MCF 10A (cell line): ENCODE measurements at regions of chr11 and their contacts with region 1.

Region 1: DNA sequence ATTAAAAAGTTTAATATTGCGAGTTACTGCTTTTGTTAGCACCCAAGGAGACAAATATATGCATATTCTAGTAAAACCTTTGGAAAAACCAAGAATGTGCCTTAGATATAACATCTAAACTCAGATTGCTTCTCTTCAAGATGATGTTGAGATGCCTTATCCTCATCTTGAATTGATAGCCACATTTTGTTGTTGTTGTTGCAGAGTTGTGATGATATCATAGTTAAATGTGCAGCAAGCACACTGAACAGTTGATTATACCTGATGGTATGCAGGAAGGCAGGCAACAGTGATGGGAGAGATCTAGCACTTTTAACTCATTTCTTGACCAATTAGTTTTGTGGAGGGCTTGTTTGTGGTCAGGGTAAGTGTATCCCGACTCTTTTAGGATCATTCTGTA is 48.0 kb downstream of the KDM2A start:
- DNase-seq: no peak
- H3K4me3 Mint-ChIP-seq: no peak overlapping the region
- H3K27ac Mint-ChIP-seq: no peak overlapping the region
- H3K4me1 Mint-ChIP-seq: peaks cover 28% of the 10 kb centered on the region
- H3K27me3 Mint-ChIP-seq: no peaks in the 10 kb centered on the region
- CTCF ChIP-seq: no peak

Region 2: DNA sequence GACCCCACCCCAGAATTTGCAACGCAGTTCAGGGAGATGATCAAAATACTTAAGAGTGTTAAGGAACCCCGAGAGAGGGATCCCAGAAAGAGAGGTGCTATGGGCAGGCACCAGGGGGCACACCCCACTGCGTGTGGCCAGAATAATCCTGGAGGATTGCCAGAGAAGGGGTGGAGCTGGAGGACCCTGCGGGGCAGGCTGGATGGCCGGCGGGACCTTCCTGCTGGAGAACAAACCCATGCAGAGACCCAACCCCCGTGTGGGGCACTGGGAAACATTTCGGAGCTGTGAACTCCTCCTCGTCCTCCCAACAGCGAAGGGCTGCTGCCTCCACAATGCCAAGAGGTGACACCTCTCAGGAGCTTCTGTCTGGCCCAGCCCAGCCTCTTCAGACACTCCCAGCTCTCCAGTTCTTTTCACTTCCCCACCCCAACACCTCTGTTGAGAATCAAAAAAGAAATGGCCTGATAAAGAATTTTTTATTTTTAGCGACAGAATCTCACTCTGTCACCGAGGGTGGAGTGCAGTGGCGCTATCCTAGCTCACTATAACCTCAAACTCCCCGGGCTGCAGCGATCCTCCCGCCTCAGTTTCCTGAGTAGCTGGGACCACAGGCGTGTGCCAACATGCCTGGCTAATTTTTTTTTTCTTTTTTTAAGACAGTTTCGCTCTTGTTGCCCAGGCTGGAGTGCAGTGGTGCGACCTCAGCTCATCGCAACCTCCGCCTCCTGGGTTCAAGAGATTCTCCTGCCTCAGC is 84.9 kb before region 1 on chr11:
- CTCF ChIA-PET with region 1: interaction called, 11 read pairs
- POLR2A ChIA-PET with region 1: interaction called, 6 read pairs
- intact Hi-C with region 1: loop called (anchors 1 kb)
- DNase-seq: no peak
- H3K4me3 Mint-ChIP-seq: no peak overlapping the region
- H3K27ac Mint-ChIP-seq: peak overlapping the region; percentile 35
- H3K4me1 Mint-ChIP-seq: peaks cover 39% of the 10 kb centered on the region
- H3K27me3 Mint-ChIP-seq: no peaks in the 10 kb centered on the region
- CTCF ChIP-seq: no peak

Region 3: GRCh38 chr11:67118801-67119584 is 48.1 kb before region 1 on chr11 and contains the start of gene KDM2A:
- CTCF ChIA-PET with region 1: interaction called, 6 read pairs
- POLR2A ChIA-PET with region 1: interaction called, 6 read pairs
- intact Hi-C with region 1: loop called (anchors 2 kb)
- DNase-seq: peak; percentile 97
- H3K4me3 Mint-ChIP-seq: peak within 1 kb of the TSS; percentile 93
- H3K27ac Mint-ChIP-seq: peak within 1 kb of the TSS; percentile 88
- H3K4me1 Mint-ChIP-seq: peaks cover 17% of the 10 kb centered on the region
- H3K27me3 Mint-ChIP-seq: no peaks in the 10 kb centered on the region
- CTCF ChIP-seq: peak; percentile 8
- total RNA-seq, gene KDM2A: 63.8 and 64.5 TPM in 2 replicates